Activated CD4-positive, alpha-beta memory T cell treated with anti-CD3 and anti-CD28 coated beads for 36 hours (primary cell): ENCODE measurements at regions of chr19 and their contacts with region 1.

Region 1: DNA sequence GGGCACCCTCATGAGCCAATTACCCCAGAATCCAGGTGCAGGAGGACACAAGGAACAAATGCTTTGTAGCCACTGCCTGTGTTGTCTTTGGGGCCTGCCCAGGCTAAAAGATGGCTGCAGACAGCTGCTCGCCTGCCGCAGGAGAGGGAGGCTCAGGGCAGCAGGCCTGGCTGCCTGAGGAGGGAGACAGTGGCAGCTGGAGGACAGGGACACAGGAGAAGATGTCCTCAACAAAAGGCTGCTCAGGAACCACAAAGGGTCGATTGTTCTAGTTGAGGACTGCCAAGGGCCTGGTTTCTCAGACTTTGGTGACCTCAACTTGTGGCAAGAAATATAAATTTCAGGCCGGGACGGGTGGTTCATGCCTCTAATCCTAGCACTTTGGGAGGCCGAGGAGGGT is 7.6 kb downstream of the SIRT2 start:
- DNase-seq: no peak
- H3K4me3 Mint-ChIP-seq: no peak overlapping the region
- H3K27ac Mint-ChIP-seq: no peak overlapping the region
- H3K4me1 Mint-ChIP-seq: peaks cover 3% of the 10 kb centered on the region
- H3K27me3 Mint-ChIP-seq: no peaks in the 10 kb centered on the region

Region 2: DNA sequence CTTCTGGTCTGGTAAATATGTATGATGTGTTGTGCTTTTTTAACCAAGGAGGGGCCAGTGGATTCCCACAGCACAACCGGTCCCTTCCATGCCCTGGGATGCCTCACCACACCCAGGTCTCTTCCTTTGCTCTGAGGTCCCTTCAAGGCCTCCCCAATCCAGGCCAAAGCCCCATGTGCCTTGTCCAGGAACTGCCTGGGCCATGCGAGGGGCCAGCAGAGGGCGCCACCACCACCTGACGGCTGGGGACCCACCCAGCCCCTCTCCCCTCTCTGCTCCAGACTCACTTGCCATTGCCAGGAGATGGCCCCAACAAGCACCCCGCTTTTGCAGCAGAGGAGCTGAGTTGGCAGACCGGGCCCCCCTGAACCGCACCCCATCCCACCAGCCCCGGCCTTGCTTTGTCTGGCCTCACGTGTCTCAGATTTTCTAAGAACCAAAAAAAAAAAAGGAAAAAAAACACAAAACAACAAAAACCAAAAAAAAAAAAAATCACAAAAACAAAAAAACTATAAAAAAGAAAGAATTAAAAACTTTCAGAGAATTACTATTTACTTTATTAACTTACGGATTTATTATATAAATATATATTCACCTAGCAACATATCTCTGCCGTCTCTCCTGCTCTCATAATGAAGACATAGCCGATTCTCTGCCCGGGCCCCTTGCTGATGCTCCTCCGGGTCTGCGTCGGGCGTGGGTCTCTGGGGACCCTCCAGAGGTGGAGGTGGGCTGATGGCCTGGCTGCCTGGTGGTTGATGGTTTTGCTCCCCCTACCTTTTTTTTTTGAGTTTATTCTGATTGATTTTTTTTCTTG is 161.9 kb before region 1 on chr19:
- CTCF ChIA-PET with region 1: interaction called, 7 read pairs
- POLR2A ChIA-PET with region 1: no interaction called
- intact Hi-C with region 1: loop called (anchors 2 kb)
- DNase-seq: peak; percentile 86
- H3K4me3 Mint-ChIP-seq: no peak overlapping the region
- H3K27ac Mint-ChIP-seq: peak overlapping the region; percentile 57
- H3K4me1 Mint-ChIP-seq: peaks cover 28% of the 10 kb centered on the region
- H3K27me3 Mint-ChIP-seq: no peaks in the 10 kb centered on the region

Region 3: GRCh38 chr19:38769635-38770211 is 122.0 kb before region 1 on chr19:
- CTCF ChIA-PET with region 1: interaction called, 11 read pairs
- POLR2A ChIA-PET with region 1: no interaction called
- intact Hi-C with region 1: no loop called
- DNase-seq: peak; percentile 93
- H3K4me3 Mint-ChIP-seq: peak overlapping the region; percentile 60
- H3K27ac Mint-ChIP-seq: peak overlapping the region; percentile 42
- H3K4me1 Mint-ChIP-seq: peaks cover 6% of the 10 kb centered on the region
- H3K27me3 Mint-ChIP-seq: no peaks in the 10 kb centered on the region

Region 4: GRCh38 chr19:38869856-38870607 is 21.7 kb before region 1 on chr19:
- CTCF ChIA-PET with region 1: interaction called, 19 read pairs
- POLR2A ChIA-PET with region 1: no interaction called
- intact Hi-C with region 1: no loop called
- DNase-seq: peak; percentile 94
- H3K4me3 Mint-ChIP-seq: peak overlapping the region; percentile 76
- H3K27ac Mint-ChIP-seq: peak overlapping the region; percentile 79
- H3K4me1 Mint-ChIP-seq: peaks cover 40% of the 10 kb centered on the region
- H3K27me3 Mint-ChIP-seq: no peaks in the 10 kb centered on the region

Region 5: GRCh38 chr19:38877781-38878574 is 13.8 kb before region 1 on chr19 and contains the start of gene RINL:
- CTCF ChIA-PET with region 1: interaction called, 51 read pairs
- POLR2A ChIA-PET with region 1: no interaction called
- intact Hi-C with region 1: no loop called
- DNase-seq: peak; percentile 84
- H3K4me3 Mint-ChIP-seq: peak within 1 kb of the TSS; percentile 98
- H3K27ac Mint-ChIP-seq: peak within 1 kb of the TSS; percentile 99
- H3K4me1 Mint-ChIP-seq: peaks cover 33% of the 10 kb centered on the region
- H3K27me3 Mint-ChIP-seq: no peaks in the 10 kb centered on the region
- total RNA-seq, gene RINL: 92.6 to 100.0 TPM

Region 6: GRCh38 chr19:39144245-39145071 is 252.7 kb after region 1 on chr19:
- CTCF ChIA-PET with region 1: no interaction called
- POLR2A ChIA-PET with region 1: no interaction called
- intact Hi-C with region 1: no loop called
- DNase-seq: no peak
- H3K4me3 Mint-ChIP-seq: no peak overlapping the region
- H3K27ac Mint-ChIP-seq: no peak overlapping the region
- H3K4me1 Mint-ChIP-seq: peaks cover 2% of the 10 kb centered on the region
- H3K27me3 Mint-ChIP-seq: no peaks in the 10 kb centered on the region